Activated CD4-positive, alpha-beta memory T cell treated with anti-CD3 and anti-CD28 coated beads, Interleukin-2, amount 10 ng/mL, durations not matched to agents 7 days and 5 days (primary cell): ENCODE measurements at regions of chr5 and their contacts with region 1.

Region 1: DNA sequence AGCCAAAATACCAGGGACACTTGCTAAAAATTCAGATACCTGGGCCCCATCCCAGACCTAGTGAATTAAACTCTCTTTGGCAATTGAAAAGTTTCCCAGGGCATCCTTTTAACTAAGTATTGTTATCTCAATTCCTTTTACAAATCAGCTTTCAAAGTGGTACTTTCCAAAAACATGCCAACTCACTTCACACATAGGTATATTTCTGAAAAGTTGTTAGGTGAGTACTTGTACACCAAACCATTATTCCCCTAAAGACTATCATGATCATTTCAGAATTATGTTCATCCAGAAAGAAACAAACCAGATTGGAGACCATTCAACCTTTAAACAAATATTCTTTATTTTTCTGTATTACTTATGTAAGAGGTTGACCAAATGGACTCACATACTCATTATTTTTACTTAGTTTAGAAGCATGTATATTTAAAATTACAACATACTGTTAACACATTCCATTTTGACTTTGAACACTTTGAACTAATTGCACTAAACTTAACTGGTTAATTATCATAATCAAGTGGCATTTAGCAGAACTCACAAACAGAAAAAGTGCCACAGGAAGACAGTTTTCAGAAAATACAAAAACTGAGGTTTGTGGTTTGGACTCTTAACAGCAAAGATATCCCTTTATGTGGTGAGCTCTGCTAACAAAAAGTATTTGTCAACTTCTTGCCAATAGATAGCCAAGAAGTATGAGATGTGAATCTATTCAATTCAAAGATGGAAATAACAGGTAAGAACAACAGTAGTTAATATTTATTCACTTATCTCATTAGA is 40.7 kb downstream of the KIAA0825 start:
- DNase-seq: no peak
- H3K4me3 Mint-ChIP-seq: peak overlapping the region; percentile 39
- H3K27ac Mint-ChIP-seq: peak overlapping the region; percentile 83
- H3K4me1 Mint-ChIP-seq: peaks cover 58% of the 10 kb centered on the region
- H3K27me3 Mint-ChIP-seq: no peaks in the 10 kb centered on the region

Region 2: GRCh38 chr5:94522099-94522498 is 55.6 kb before region 1 on chr5:
- CTCF ChIA-PET with region 1: no interaction called
- POLR2A ChIA-PET with region 1: no interaction called
- DNase-seq: no peak
- H3K4me3 Mint-ChIP-seq: no peak overlapping the region
- H3K27ac Mint-ChIP-seq: no peak overlapping the region
- H3K4me1 Mint-ChIP-seq: peaks cover 3% of the 10 kb centered on the region
- H3K27me3 Mint-ChIP-seq: no peaks in the 10 kb centered on the region

Region 3: GRCh38 chr5:94618493-94619328 is 41.1 kb after region 1 on chr5 and contains the starts of genes KIAA0825 and SLF1:
- CTCF ChIA-PET with region 1: interaction called, 7 read pairs
- POLR2A ChIA-PET with region 1: interaction called, 36 read pairs
- DNase-seq: peak; percentile 91
- H3K4me3 Mint-ChIP-seq: peak within 1 kb of the TSS; percentile 88
- H3K27ac Mint-ChIP-seq: peak within 1 kb of the TSS; percentile 74
- H3K4me1 Mint-ChIP-seq: peaks cover 54% of the 10 kb centered on the region
- H3K27me3 Mint-ChIP-seq: no peaks in the 10 kb centered on the region
- total RNA-seq, gene KIAA0825: 1.5 to 1.7 TPM
- total RNA-seq, gene SLF1: 19.5 to 22.9 TPM

Region 4: DNA sequence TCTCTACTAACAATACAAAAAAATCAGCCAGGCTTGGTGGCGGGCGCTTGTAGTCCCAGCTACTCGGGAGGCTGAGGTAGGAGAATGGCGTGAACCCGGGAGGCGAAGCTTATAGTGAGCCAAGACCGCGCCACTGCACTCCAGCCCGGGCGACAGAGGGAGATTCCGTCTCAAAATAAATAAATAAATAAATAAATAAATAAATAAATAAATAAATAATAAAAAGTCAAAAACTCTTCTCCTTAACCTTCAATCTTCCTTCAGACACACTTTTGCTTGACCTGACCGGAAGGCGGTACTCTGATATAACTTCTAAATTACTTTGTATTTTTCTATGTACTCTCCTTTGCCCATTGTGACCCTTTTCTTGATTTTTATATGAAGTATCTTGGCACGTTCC is 342.9 kb after region 1 on chr5:
- CTCF ChIA-PET with region 1: no interaction called
- POLR2A ChIA-PET with region 1: no interaction called
- DNase-seq: no peak
- H3K4me3 Mint-ChIP-seq: no peak overlapping the region
- H3K27ac Mint-ChIP-seq: no peak overlapping the region
- H3K4me1 Mint-ChIP-seq: no peaks in the 10 kb centered on the region
- H3K27me3 Mint-ChIP-seq: peaks cover 8% of the 10 kb centered on the region